ENCODE measurements at regions of chr6 and their contacts with region 1.

Region 1: DNA sequence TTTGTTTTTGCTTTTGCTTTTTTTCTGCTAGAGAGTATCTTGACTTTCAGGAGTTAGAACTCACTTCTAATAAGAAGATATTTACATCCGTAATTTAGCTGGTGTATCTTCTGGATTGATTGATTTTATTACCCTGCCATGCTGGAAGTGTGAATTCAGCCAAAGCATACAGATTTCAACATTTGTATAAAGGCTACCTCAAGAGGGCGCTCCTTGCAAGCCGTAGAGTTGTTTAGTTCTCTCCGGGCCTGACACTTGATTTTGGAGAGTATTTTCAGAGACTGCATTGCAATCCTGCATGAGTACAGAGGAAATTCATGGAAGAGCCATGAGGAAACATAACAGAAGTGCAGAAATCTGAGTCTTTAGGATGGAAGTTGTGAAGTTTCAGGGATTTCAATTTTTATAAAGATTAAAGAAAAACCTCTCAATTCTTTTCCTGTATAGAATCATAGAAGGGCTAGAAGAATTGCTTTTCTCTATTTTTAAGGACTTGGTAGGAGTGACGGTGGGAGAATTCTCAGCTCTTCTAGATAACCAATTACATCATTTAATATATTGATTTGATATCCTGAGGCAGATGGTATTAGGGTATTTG is 66.7 kb upstream of the TIAM2 start:
- DNase-seq: peak; percentile 49
- ATAC-seq: peak; percentile 58
- H3K4me3 ChIP-seq: no peak overlapping the region
- H3K27ac ChIP-seq: no peak overlapping the region
- H3K4me1 ChIP-seq: peaks cover 21 to 23% of the 10 kb centered on the region in 2 experiments
- H3K27me3 ChIP-seq: no peaks in the 10 kb centered on the region
- CTCF ChIP-seq: peak; percentile 71 to 91 (median 89)
- POLR2A ChIP-seq: no peak
- RAD21 ChIP-seq: peak; percentile 97

Region 2: DNA sequence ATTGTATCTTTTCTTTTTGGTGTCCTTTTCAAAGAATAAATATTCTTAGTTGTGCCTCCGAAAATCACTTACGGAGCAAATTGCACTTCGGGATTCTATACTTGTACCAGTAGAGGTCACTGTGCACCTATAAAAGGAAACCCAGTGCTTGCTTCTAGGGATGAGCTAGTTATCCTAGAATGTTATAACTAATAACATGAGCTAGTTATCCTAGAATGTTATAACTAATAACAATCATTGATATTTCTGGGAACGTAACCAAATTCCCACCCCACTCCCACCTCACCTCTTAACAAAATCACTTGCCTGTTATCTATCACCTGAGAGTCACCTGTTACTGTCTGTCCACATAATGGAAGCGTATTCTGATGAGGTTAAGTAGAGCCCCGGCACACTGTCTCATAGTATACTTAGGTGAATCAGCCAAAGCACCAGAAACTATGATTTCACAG is 60.3 kb before region 1 on chr6:
- CTCF ChIA-PET with region 1: interaction called, 11 read pairs
- POLR2A ChIA-PET with region 1: no interaction called
- RAD21 ChIA-PET with region 1: no interaction called
- intact Hi-C with region 1: loop called (anchors 5 kb)
- DNase-seq: peak; percentile 12
- ATAC-seq: peak; percentile 68
- H3K4me3 ChIP-seq: no peak overlapping the region
- H3K27ac ChIP-seq: no peak overlapping the region
- H3K4me1 ChIP-seq: no peaks in the 10 kb centered on the region
- H3K27me3 ChIP-seq: no peaks in the 10 kb centered on the region
- CTCF ChIP-seq: peak; percentile 29 to 80 (median 67); a peak in 5 of 6 replicates
- POLR2A ChIP-seq: no peak
- RAD21 ChIP-seq: peak; percentile 70

Region 3: DNA sequence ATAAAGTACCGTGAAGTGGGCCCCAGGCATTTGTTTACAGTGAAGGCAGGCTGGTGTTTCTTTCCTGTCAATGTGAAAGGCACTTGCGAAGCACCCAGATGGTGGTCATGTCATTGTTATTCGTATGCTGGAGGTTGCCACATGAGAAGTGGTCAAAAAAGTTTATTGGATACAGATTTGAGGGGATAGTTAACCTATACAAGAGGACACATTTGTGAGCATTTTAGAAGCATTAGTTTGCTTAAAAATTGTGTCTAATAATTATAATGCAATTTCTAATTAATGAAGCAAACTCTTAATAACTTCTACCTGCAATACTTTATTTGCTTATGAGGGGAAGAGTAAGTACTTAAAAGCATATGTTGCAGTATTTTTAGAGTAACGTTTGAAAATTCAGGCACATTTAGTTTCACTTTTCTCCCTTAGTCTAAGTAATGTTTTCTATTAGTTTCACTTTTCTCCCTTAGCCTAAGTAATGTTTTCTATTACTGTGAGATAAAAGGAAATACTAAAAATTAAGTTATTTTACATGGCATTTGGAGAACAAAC is 214.7 kb after region 1 on chr6:
- CTCF ChIA-PET with region 1: no interaction called
- POLR2A ChIA-PET with region 1: no interaction called
- RAD21 ChIA-PET with region 1: no interaction called
- intact Hi-C with region 1: no loop called
- DNase-seq: no peak
- ATAC-seq: no peak
- H3K4me3 ChIP-seq: no peak overlapping the region
- H3K27ac ChIP-seq: no peak overlapping the region
- H3K4me1 ChIP-seq: no peaks in the 10 kb centered on the region
- H3K27me3 ChIP-seq: no peaks in the 10 kb centered on the region
- CTCF ChIP-seq: no peak
- POLR2A ChIP-seq: no peak
- RAD21 ChIP-seq: no peak

Region 4: DNA sequence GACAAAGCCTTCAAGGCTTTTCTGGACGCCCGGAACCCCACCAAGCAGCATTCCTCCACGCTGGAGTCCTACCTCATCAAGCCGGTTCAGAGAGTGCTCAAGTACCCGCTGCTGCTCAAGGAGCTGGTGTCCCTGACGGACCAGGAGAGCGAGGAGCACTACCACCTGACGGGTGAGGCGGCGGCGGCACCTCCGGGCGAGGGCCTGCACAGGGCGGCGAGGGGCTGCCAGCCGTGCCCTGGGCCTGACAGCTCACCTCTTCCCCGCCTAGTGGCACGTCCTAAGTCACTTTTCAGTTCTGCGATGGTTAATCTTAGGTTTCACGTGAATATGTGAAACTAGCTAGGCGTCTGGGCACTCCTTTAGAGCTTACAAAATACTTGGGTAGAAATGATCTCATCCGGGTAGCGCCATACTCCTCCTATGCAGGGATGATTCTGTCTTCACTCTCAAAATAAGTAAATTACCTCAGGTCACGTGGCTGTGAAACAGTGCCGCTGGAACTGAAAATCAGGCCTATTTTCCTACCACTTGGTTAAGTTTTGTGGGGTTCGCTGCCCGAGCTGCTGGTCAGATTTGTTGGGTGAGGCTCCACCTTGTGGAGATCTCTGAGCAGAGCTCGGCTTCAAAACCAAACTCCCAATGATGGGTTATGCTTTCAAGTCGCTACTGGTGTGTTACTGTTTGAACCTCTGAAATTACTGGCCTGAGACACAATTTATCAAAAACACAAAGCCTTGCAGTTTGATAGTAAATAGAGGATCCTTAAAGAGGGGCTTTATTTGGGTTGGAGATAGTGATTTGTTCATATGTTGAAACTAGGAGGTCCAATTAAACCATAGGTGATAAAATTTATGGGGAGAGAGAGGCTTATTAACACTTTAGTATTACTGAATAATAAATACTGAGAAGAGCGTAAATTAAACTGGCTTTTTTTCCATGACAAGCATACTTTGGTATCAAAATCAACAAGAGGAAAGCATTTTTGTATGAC is 319.9 kb after region 1 on chr6:
- CTCF ChIA-PET with region 1: interaction called, 12 read pairs
- POLR2A ChIA-PET with region 1: no interaction called
- RAD21 ChIA-PET with region 1: interaction called in 1 of 2 experiments, 3 read pairs
- intact Hi-C with region 1: loop called (anchors 1 kb)
- DNase-seq: peak; percentile 21
- ATAC-seq: peak; percentile 74
- H3K4me3 ChIP-seq: no peak overlapping the region
- H3K27ac ChIP-seq: no peak overlapping the region
- H3K4me1 ChIP-seq: peaks cover 0 to 12% of the 10 kb centered on the region in 2 experiments; a peak in 2 of 4 replicates
- H3K27me3 ChIP-seq: no peaks in the 10 kb centered on the region
- CTCF ChIP-seq: peak; percentile 57 to 70 (median 59); a peak in 5 of 6 replicates
- POLR2A ChIP-seq: no peak
- RAD21 ChIP-seq: peak; percentile 76

Region 5: DNA sequence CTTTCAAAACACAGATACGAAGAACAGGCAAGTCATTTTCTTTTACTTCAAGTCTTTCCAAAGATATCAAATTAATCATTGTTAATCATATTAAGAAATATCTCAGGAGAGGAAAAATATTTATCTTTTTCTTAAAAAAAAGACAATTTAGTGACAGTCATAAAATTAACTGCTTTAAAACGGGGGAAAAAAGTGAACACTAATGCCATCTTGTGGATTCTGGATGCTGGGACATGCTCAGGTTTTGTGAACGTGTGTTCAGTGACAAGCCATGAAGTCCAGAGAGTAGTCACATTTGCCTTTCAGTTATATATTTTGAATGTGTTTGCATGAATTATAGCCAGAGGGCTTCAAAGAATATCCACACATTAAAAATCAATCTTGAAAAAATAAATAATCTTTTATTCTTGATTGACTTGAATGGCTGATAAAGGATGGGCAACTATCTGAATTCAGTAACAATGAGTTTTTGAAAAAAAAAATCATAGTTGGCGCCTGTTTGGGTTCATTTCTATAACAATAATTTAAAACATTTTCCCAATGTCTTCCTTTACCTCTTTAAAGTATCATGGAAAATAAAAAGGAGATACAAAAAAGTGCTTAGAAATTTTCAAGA is 601.9 kb after region 1 on chr6:
- CTCF ChIA-PET with region 1: no interaction called
- POLR2A ChIA-PET with region 1: no interaction called
- RAD21 ChIA-PET with region 1: no interaction called
- intact Hi-C with region 1: loop called (anchors 10 kb)
- DNase-seq: peak; percentile 27
- ATAC-seq: peak; percentile 79
- H3K4me3 ChIP-seq: no peak overlapping the region
- H3K27ac ChIP-seq: no peak overlapping the region
- H3K4me1 ChIP-seq: peaks cover 0 to 3% of the 10 kb centered on the region in 2 experiments; a peak in 2 of 4 replicates
- H3K27me3 ChIP-seq: no peaks in the 10 kb centered on the region
- CTCF ChIP-seq: peak; percentile 63 to 70 (median 69); a peak in 5 of 6 replicates
- POLR2A ChIP-seq: no peak
- RAD21 ChIP-seq: peak; percentile 81